HepG2 (cell line): ENCODE measurements at regions of chr6 and their contacts with region 1.

Region 1: DNA sequence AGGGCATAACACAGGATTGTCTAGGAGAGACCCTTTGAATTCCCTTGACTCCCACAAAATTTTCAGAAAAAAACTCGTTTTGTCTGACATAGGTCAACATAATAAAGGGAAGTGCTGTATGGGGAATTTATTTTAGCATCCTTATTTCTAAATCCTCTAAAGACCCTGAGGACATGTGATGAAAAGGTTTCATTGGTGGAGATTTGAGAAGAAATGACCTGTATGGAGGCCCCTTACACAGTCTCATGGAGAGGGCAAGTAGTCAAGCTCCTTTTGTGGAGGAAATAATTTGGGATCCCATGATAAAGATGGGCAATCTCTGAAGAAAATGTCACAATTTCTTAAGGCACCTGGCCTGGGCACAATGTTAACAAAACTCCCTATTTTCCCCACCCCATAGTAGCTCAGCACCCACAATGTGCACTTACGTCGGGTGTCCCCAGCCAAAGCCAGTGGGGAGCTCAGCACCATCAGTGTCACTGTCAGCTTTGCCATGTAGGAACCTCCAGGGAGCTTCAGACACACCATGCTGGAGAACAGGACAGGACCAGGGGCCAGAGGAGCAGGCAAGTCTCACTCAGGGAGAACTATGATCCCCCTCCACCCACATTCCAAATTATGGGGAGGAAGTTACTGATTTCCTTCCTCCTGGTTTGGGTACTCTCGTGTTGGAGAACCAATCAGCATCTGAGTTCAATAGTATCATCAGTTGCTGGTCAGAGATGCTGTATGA is at the start of gene HLA-DRB5:
- DNase-seq: no peak
- ATAC-seq: no peak; the same call in 2 of the 3 replicates
- H3K4me3 ChIP-seq: no peak within 1 kb of the TSS
- H3K27ac ChIP-seq: no peak within 1 kb of the TSS
- H3K4me1 ChIP-seq: no peaks in the 10 kb centered on the region
- H3K27me3 ChIP-seq: no peaks in the 10 kb centered on the region
- CTCF ChIP-seq: no peak
- EP300 ChIP-seq: no peak
- POLR2A ChIP-seq: no peak
- RAD21 ChIP-seq: no peak
- total RNA-seq, gene HLA-DRB5: not detected in 2 replicates

Region 2: DNA sequence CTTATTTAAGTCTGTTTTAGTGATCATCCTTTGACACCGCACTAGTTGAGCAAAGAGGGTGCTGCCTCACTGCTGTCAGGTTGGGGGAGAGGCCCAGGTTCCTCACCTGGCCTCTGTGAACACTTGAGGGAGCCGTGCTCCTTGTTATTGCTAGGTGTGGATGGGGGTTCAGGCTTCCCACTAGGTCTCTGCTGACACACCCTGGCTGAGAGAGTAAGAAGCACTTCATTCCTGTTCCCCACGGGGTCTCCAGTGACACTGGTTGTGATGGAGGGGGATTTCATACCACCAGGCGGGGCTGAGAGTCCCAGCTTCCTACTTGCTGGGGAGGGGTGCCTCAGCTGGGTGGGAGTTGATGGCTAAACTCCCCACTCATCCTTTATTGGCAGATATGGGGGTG is 294.9 kb before region 1 on chr6:
- CTCF ChIA-PET with region 1: no interaction called
- POLR2A ChIA-PET with region 1: no interaction called
- in situ Hi-C with region 1: no loop called
- intact Hi-C with region 1: no loop called
- DNase-seq: no peak
- ATAC-seq: peak; percentile 27; the same call in 1 of the 3 replicates
- H3K4me3 ChIP-seq: no peak overlapping the region
- H3K27ac ChIP-seq: no peak overlapping the region
- H3K4me1 ChIP-seq: no peaks in the 10 kb centered on the region
- H3K27me3 ChIP-seq: peaks cover 0 to 3% of the 10 kb centered on the region in 2 experiments; a peak in 1 of 5 replicates
- CTCF ChIP-seq: peak; percentile 48
- EP300 ChIP-seq: no peak
- POLR2A ChIP-seq: no peak
- RAD21 ChIP-seq: no peak

Region 3: DNA sequence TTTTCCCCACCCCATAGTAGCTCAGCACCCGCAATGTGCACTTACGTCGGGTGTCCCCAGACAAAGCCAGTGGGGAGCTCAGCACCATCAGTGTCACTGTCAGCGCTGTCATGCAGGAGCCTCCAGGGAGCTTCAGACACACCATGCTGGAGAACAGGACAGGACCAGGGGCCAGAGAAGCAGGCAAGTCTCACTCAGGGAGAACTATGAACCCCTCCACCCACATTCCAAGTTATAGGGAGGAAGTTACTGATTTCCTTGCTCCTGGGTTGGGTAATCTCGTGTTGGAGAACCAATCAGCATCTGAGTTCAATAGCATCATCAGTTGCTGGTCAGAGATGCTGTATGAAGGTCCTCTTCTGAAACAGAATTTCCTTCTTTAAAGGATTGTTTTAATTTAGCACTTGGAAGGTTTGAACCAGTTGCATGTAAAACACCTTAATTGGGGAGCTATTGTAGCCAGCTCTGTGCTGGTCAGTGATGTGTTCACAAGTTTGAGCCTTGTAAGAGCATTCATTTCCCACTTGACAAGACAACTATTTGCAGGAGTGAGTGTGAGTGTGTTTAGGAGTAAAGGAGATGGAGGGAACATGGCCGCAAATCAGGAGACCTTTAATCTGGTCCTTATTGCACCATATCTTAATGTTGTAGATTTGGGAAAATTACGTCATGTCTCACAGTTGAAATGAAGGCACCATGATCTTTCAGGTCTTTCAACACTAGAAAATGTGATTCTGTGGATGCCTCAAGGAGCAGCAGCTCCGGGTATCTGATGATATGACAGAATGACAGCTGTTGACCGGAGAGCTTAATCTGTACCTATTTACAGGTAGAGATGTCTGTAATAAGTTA is 60.0 kb after region 1 on chr6 and contains the start of gene HLA-DRB1:
- CTCF ChIA-PET with region 1: no interaction called
- POLR2A ChIA-PET with region 1: no interaction called
- in situ Hi-C with region 1: loop called (anchors 5 kb)
- intact Hi-C with region 1: no loop called
- DNase-seq: peak; percentile 41
- ATAC-seq: peak; percentile 93
- H3K4me3 ChIP-seq: no peak within 1 kb of the TSS
- H3K27ac ChIP-seq: no peak within 1 kb of the TSS
- H3K4me1 ChIP-seq: no peaks in the 10 kb centered on the region
- H3K27me3 ChIP-seq: no peaks in the 10 kb centered on the region; a peak in 1 of 5 replicates
- CTCF ChIP-seq: no peak
- EP300 ChIP-seq: no peak
- POLR2A ChIP-seq: no peak
- RAD21 ChIP-seq: no peak
- total RNA-seq, gene HLA-DRB1: 0.09 TPM in 1 of 2 replicates, not detected in the other